Activated CD4-positive, alpha-beta T cell treated with anti-CD3 and anti-CD28 coated beads for 36 hours (primary cell): ENCODE measurements at regions of chr13 and their contacts with region 1.

Region 1: DNA sequence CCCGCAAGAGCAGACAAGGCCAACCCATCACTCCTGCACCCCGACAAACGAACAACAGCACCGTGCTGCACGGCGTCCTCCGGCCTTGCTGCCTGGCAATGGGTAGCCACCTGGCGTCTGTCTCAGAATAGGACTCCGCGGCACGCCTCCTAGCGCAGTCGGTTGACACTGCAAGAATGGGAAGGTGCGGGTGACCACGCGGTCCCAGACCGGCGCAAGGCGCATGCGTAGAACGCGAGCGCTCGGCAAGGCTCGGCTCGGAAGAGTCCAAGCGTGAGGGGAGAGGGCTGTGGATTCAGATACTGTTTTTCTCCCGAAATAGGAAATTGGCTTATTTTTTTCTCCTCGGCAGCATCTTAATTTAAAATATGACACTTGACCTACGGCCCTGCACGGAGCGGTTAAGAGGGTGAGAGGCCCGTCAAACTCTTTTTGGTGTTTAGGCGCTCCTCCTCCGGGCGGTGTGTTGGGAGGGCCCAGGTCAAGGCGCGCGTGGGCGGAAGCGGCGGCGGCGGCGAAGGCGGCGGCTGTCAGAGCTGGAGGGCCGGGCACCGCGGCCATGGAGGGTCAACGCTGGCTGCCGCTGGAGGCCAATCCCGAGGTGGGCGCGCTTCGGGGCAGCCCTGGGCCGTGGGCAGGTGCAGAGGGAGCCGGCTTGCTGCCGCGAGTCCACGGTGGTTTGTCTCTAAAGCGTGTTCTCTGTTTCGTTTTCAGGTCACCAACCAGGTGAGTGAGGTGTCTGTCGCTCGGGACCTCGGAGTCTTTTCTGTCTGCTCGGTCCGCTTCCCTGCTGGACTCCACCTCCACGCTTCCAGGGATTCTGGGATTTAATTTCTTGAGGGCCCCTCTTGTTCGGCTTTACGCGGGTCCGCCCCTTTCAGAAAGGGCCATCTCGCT is at the start of gene UCHL3:
- DNase-seq: peak; percentile 99
- ATAC-seq: peak; percentile 96
- H3K4me3 Mint-ChIP-seq: peak within 1 kb of the TSS; percentile 85
- H3K27ac Mint-ChIP-seq: peak within 1 kb of the TSS; percentile 95
- H3K4me1 Mint-ChIP-seq: peaks cover 41% of the 10 kb centered on the region
- H3K27me3 Mint-ChIP-seq: no peaks in the 10 kb centered on the region
- total RNA-seq, gene UCHL3: 42.2 to 45.3 TPM

Region 2: GRCh38 chr13:75372517-75372916 is 177.0 kb before region 1 on chr13:
- CTCF ChIA-PET with region 1: interaction called, 3 read pairs
- POLR2A ChIA-PET with region 1: no interaction called
- intact Hi-C with region 1: loop called (anchors 1 kb)
- DNase-seq: no peak
- ATAC-seq: peak; percentile 71
- H3K4me3 Mint-ChIP-seq: no peak overlapping the region
- H3K27ac Mint-ChIP-seq: no peak overlapping the region
- H3K4me1 Mint-ChIP-seq: peaks cover 6% of the 10 kb centered on the region
- H3K27me3 Mint-ChIP-seq: no peaks in the 10 kb centered on the region

Region 3: GRCh38 chr13:75425216-75426009 is 124.1 kb before region 1 on chr13:
- CTCF ChIA-PET with region 1: no interaction called
- POLR2A ChIA-PET with region 1: no interaction called
- intact Hi-C with region 1: no loop called
- DNase-seq: no peak
- ATAC-seq: no peak
- H3K4me3 Mint-ChIP-seq: no peak overlapping the region
- H3K27ac Mint-ChIP-seq: no peak overlapping the region
- H3K4me1 Mint-ChIP-seq: no peaks in the 10 kb centered on the region
- H3K27me3 Mint-ChIP-seq: peaks cover 25% of the 10 kb centered on the region

Region 4: DNA sequence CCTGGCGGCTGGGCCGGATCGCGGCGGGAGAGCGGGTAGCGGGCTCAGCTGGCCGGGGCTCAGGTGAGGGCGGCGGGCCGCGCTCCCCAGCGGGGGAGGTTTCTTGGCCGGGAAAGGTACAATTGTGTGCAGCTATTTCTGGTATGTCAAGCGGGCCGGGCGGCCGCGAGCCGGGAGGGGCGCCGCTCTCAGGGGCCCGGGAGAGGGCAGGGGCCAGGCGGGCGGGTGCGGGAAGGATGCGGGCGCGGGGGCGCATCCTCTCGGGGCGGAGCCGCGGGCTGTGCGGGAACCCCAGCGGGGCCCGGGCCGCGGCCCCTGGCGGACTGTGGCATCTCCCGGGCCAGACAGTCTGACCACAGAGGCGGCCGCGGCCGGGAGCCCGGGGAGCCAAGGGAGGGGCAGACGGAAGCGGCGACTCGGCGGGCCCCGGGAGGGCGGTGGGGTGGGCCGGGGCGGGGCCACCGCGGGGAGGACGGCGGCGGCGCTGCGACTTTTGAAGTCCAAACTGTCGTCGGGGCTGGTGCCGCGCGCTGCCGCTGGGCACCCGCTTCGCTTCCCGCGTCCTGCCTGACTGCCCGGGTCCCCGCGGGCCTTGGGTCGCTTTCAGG is 86.4 kb after region 1 on chr13 and contains the start of gene LMO7:
- CTCF ChIA-PET with region 1: no interaction called
- POLR2A ChIA-PET with region 1: no interaction called
- intact Hi-C with region 1: loop called in 1 of 2 experiments (anchors 1 kb)
- DNase-seq: peak; percentile 63
- ATAC-seq: peak; percentile 49
- H3K4me3 Mint-ChIP-seq: peak within 1 kb of the TSS; percentile 69
- H3K27ac Mint-ChIP-seq: no peak within 1 kb of the TSS
- H3K4me1 Mint-ChIP-seq: peaks cover 13% of the 10 kb centered on the region
- H3K27me3 Mint-ChIP-seq: peaks cover 18% of the 10 kb centered on the region
- total RNA-seq, gene LMO7: 11.7 to 15.5 TPM

Region 5: DNA sequence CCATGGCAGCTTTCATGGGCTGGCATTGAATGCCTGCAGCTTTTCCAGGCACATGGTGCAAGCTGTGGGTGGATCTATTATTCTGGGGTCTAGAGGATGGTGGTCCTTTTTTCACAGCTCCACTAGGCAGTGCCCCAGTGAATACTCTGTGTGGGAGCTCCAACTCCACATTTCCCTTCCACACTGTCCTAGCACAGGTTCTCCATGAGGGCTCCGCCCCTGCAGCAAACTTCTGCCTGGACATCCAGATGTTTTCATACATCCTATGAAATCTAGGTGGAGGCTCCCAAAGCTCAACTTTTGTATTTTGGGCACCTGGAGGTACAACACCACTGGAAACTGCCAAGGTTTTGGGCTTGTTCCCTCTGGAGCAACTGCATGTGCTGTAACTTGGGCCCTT is 537.2 kb after region 1 on chr13:
- CTCF ChIA-PET with region 1: no interaction called
- POLR2A ChIA-PET with region 1: no interaction called
- intact Hi-C with region 1: no loop called
- DNase-seq: no peak
- ATAC-seq: no peak
- H3K4me3 Mint-ChIP-seq: no peak overlapping the region
- H3K27ac Mint-ChIP-seq: no peak overlapping the region
- H3K4me1 Mint-ChIP-seq: no peaks in the 10 kb centered on the region
- H3K27me3 Mint-ChIP-seq: no peaks in the 10 kb centered on the region